ENCODE measurements at regions of chr6 and their contacts with region 1.

Region 1: GRCh38 chr6:44086931-44087574 is 40.2 kb downstream of the MRPL14 start:
- DNase-seq: peak; percentile 82
- ATAC-seq: peak; percentile 73
- H3K4me3 ChIP-seq: no peak overlapping the region
- H3K27ac ChIP-seq: no peak overlapping the region
- H3K4me1 ChIP-seq: no peaks in the 10 kb centered on the region
- H3K27me3 ChIP-seq: no peaks in the 10 kb centered on the region
- CTCF ChIP-seq: no peak

Region 2: GRCh38 chr6:43667245-43668150 is 419.6 kb before region 1 on chr6:
- intact Hi-C with region 1: loop called (anchors 10 kb)
- DNase-seq: peak; percentile 89
- ATAC-seq: peak; percentile 85
- H3K4me3 ChIP-seq: no peak overlapping the region
- H3K27ac ChIP-seq: no peak overlapping the region
- H3K4me1 ChIP-seq: peaks cover 32% of the 10 kb centered on the region
- H3K27me3 ChIP-seq: no peaks in the 10 kb centered on the region
- CTCF ChIP-seq: peak; percentile 97

Region 3: GRCh38 chr6:44028789-44029310 is 58.2 kb before region 1 on chr6:
- intact Hi-C with region 1: no loop called
- DNase-seq: peak; percentile 18
- ATAC-seq: no peak
- H3K4me3 ChIP-seq: no peak overlapping the region
- H3K27ac ChIP-seq: peak overlapping the region; percentile 24
- H3K4me1 ChIP-seq: no peaks in the 10 kb centered on the region
- H3K27me3 ChIP-seq: peaks cover 3% of the 10 kb centered on the region
- CTCF ChIP-seq: no peak

Measured in upper lobe of right lung (tissue), 1 donor.